Mammary epithelial cell (primary cell): ENCODE measurements at regions of chr4 and their contacts with region 1.

Region 1: GRCh38 chr4:94722748-94723147 is 35.0 kb upstream of the BMPR1B start:
- DNase-seq: no peak
- H3K4me3 ChIP-seq: no peak overlapping the region
- H3K27ac ChIP-seq: no peak overlapping the region
- H3K4me1 ChIP-seq: no peaks in the 10 kb centered on the region
- H3K27me3 ChIP-seq: no peaks in the 10 kb centered on the region
- CTCF ChIP-seq: no peak

Region 2: DNA sequence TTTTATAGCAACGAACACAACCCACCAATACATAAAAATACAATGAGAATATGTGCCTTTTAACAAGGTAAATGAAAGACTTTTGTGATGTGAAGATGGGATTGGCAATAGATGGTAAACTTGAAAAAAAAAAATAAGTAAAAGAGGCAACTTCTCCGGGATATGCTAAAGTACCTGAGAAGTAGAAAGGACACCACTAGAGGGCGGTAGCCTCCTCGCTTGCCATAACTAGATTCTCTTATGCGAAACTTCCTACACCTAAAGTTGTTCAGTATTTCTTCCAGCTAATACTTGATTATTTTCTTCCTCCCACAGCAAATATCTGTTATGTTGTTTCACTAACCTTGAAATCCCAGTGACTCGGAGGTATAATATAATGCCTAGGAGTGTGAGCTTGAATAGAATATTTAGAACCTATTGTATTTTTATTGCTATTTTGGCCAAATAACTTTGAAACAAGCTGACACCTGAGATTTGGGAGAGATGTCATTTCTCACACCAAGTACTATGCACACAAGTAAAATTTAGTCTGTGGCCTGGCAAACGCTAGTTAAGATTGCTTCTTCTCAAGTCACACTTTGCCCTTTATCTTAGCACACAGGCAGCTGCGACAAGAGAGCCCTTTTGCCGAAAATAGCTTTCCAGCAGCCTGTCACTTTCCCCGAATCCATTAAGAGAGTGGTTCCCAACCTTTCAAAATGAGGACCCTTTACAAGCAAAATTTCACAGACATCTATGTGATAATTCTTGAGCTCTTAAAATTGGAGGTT is 315.9 kb before region 1 on chr4:
- CTCF ChIA-PET with region 1: no interaction called
- dilution Hi-C with region 1: no loop called
- in situ Hi-C with region 1: no loop called
- intact Hi-C with region 1: loop called (anchors 10 kb)
- DNase-seq: peak; percentile 59
- H3K4me3 ChIP-seq: no peak overlapping the region
- H3K27ac ChIP-seq: no peak overlapping the region
- H3K4me1 ChIP-seq: no peaks in the 10 kb centered on the region
- H3K27me3 ChIP-seq: no peaks in the 10 kb centered on the region
- CTCF ChIP-seq: peak; percentile 85 to 91

Region 3: DNA sequence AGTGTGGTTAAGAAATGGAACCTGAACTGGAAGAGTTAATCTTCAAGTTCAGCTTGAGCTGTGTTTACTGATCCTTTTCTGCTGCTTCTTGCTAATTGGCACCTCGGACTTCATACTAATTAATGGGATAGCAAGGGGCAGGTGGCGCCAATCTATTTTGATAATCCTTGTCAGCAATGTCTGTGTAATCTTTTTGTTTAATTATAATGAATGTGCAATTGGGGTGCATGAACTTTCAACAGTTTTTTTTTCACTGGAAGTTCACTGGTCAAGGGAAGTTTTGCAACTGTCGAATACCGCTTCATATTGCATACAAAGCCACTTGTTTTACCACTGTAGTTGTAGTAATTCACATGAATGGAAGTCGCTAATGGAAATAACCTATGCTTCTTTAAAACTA is 296.0 kb after region 1 on chr4:
- CTCF ChIA-PET with region 1: no interaction called
- dilution Hi-C with region 1: no loop called
- in situ Hi-C with region 1: no loop called
- intact Hi-C with region 1: no loop called
- DNase-seq: no peak
- H3K4me3 ChIP-seq: no peak overlapping the region
- H3K27ac ChIP-seq: no peak overlapping the region
- H3K4me1 ChIP-seq: no peaks in the 10 kb centered on the region
- H3K27me3 ChIP-seq: no peaks in the 10 kb centered on the region
- CTCF ChIP-seq: no peak